ENCODE measurements at regions of chr17 and their contacts with region 1.

Region 1: GRCh38 chr17:60525685-60526514 is at the start of gene APPBP2:
- DNase-seq: peak; percentile 76 to 98 (median 88)

Region 2: GRCh38 chr17:60443713-60444112 is 82.2 kb before region 1 on chr17:
- intact Hi-C with region 1: loop called (anchors 2 kb)
- DNase-seq: no peak

Region 3: DNA sequence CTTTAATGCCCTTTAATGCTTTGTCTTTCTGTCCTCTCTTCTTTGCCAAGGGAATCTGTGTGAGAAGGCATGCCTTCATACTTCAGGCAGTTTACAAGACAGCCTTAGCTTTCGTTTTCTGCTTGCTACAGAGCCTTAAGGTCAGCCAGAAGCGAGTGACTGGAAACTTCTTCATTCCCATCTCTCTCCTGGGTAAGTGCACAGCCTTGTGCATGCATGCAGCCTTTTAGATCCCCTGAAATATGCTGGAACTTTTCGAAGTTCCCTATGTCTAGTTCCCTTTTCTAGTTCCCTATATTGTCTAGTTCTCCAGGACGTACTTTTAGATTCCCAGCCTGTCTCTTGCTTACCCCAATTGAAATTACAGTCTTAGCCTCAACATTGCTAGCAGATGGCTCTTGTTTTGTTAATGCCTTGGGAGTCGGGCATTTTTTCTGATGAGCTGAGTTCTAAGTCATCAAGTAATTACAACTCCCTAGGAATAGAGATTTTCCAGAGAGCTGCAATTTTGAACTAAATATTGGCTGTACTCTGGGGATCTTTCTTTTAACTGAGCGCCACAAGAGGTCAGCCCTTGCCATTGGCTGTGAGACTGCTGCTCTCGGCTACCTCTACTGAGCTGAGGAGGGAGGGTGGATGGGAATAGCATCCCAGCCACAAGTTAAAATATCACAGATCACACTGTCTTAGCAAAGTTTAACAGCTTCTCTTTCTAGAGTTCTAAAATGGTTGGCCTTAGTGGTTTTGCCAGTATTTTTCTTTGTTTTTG is 51.4 kb after region 1 on chr17:
- intact Hi-C with region 1: loop called (anchors 5 kb)
- DNase-seq: peak in 6 of 10 donors; percentile 20 to 89 (median 48)

Measured in posterior cingulate gyrus (tissue), 11 donors.